Activated CD4-positive, alpha-beta memory T cell treated with anti-CD3 and anti-CD28 coated beads for 36 hours (primary cell): ENCODE measurements at regions of chr15 and their contacts with region 1.

Region 1: DNA sequence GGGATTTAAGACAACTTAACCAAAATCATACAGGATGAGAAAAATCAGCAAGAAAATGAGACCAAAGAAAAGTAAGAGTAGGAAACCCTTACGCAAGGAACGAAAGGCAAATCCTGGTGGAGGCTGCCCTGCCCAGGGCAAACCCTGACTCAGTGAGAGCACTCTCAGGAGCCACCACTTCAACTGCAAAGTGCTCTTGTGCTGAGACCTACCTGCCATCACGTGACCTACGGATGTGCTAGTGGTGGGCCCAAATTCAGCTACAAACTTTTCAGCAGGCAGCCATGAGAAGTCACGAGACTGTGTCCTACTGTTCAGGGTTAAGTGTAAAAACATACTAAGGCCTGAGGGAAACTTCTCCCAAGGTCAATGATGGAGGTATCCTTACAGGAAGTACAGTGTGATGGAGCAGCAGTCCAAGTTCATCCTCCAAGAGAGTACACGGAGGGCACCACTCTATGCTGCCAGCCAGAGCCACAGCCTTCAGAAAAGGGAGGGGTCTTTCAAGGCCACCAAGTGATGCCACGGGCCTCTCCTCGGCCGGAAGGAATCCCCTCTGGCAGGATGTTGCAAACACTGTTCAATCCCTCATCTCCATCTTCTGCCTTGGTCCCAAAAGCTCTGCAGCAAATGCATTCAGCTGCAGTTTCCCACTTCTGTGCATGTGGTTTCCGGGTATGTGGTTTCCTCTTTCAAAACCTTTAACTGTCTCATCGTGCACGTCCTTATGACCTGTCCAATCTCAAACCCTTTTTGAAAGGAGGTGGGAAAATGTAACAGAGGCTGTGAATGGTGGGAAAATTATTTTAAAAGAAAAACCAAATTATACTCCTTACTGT is 9.5 kb downstream of the CHSY1 start:
- DNase-seq: peak; percentile 68
- H3K4me3 Mint-ChIP-seq: peak overlapping the region; percentile 50
- H3K27ac Mint-ChIP-seq: peak overlapping the region; percentile 82
- H3K4me1 Mint-ChIP-seq: peaks cover 83% of the 10 kb centered on the region
- H3K27me3 Mint-ChIP-seq: no peaks in the 10 kb centered on the region

Region 2: DNA sequence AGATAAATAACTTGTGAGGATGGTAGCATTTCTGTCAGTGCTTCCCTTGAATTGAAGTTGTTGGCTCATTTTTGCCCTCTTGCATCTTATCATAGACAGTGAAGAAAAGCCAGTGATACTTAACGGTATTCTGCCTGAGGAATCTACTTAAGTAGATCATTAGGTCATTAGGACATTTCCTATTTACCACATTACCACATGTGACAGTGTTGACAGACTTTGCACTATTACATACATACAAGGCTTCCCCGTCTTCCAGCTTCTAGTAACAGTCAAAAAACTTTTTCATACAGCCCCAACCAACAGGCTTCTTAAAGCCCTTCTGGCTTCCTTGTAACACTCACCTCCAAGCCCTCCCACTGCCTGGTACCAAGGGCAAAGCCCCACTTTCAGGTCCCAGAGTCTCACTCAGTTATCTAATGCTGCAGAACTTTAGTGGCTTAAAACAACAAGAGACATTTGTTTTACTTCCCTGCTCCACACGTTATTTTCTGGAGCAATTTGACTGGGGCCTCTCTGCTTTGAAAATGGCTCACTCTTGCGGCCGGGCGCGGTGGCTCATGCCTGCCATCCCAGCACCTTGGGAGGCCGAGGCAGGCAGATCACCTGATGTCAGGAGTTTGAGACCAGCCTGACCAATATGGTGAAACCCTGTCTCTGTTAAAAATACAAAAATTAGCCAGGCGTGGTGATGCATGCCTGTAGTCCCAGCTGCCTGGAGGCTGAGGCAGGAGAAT is 600.0 kb before region 1 on chr15:
- CTCF ChIA-PET with region 1: no interaction called
- POLR2A ChIA-PET with region 1: no interaction called
- intact Hi-C with region 1: no loop called
- DNase-seq: no peak
- H3K4me3 Mint-ChIP-seq: no peak overlapping the region
- H3K27ac Mint-ChIP-seq: no peak overlapping the region
- H3K4me1 Mint-ChIP-seq: peaks cover 33% of the 10 kb centered on the region
- H3K27me3 Mint-ChIP-seq: no peaks in the 10 kb centered on the region

Region 3: GRCh38 chr15:101088788-101089583 is 153.4 kb before region 1 on chr15:
- CTCF ChIA-PET with region 1: interaction called, 13 read pairs
- POLR2A ChIA-PET with region 1: no interaction called
- intact Hi-C with region 1: no loop called
- DNase-seq: peak; percentile 84
- H3K4me3 Mint-ChIP-seq: no peak overlapping the region
- H3K27ac Mint-ChIP-seq: no peak overlapping the region
- H3K4me1 Mint-ChIP-seq: no peaks in the 10 kb centered on the region
- H3K27me3 Mint-ChIP-seq: peaks cover 1% of the 10 kb centered on the region

Region 4: DNA sequence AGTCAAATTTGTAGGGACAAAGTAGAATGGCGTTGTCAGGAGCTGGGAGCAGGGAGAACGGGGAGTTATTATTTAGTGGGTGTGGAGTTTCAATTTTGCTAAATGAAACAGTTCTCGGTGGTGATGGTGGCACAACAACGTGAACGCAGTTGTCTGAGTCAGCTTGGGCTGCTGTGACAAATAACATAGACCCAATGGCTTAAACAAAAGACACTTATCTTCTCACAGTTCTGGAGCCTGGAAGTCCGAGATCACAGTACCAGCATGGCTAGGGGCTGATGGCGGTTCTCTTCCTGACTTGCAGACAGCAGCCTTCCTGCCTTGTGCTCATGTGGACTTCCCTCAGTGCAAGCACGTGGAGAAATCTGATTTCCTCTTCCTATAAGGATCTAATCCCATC is 80.7 kb before region 1 on chr15:
- CTCF ChIA-PET with region 1: no interaction called
- POLR2A ChIA-PET with region 1: no interaction called
- intact Hi-C with region 1: loop called (anchors 1 kb)
- DNase-seq: peak; percentile 73
- H3K4me3 Mint-ChIP-seq: peak overlapping the region; percentile 4
- H3K27ac Mint-ChIP-seq: peak overlapping the region; percentile 75
- H3K4me1 Mint-ChIP-seq: peaks cover 33% of the 10 kb centered on the region
- H3K27me3 Mint-ChIP-seq: no peaks in the 10 kb centered on the region

Region 5: GRCh38 chr15:101407439-101407838 is 165.1 kb after region 1 on chr15:
- CTCF ChIA-PET with region 1: no interaction called
- POLR2A ChIA-PET with region 1: no interaction called
- intact Hi-C with region 1: no loop called
- DNase-seq: no peak
- H3K4me3 Mint-ChIP-seq: no peak overlapping the region
- H3K27ac Mint-ChIP-seq: no peak overlapping the region
- H3K4me1 Mint-ChIP-seq: no peaks in the 10 kb centered on the region
- H3K27me3 Mint-ChIP-seq: peaks cover 8% of the 10 kb centered on the region